GM10248 (cell line): ENCODE measurements at regions of chr5 and their contacts with region 1.

Region 1: GRCh38 chr5:10364186-10364683 is 10.7 kb downstream of the MARCHF6 start:
- DNase-seq: no peak
- CTCF ChIP-seq: no peak

Region 2: DNA sequence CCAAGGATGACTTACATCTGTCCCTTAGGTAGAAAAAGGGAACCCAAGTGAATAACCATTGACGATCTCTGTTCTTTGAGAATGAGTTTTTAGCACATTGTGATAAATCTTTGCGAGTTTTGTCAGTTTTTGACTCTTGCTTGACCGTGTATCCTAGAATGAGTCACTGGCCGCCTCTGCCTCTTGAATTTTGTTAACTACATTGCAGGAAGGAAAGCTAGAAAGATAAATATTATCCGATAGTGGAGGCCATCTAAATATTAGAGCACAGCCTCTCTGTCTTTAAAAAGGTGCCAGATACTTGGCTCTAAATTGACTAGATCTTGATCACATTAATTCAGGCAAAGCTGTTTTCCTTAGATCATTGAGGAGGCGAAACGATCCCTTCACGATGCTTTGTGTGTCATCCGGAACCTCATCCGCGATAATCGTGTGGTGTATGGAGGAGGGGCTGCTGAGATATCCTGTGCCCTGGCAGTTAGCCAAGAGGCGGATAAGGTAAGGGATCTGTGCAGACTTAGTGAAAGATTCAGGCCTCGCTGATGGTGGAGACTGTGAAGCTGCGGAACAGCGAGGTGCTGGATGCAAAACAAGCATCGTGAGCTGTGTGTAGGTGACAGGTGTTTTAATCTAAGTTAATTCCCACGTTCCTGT is 102.0 kb before region 1 on chr5:
- CTCF ChIA-PET with region 1: no interaction called
- POLR2A ChIA-PET with region 1: no interaction called
- DNase-seq: no peak
- CTCF ChIP-seq: no peak

Region 3: DNA sequence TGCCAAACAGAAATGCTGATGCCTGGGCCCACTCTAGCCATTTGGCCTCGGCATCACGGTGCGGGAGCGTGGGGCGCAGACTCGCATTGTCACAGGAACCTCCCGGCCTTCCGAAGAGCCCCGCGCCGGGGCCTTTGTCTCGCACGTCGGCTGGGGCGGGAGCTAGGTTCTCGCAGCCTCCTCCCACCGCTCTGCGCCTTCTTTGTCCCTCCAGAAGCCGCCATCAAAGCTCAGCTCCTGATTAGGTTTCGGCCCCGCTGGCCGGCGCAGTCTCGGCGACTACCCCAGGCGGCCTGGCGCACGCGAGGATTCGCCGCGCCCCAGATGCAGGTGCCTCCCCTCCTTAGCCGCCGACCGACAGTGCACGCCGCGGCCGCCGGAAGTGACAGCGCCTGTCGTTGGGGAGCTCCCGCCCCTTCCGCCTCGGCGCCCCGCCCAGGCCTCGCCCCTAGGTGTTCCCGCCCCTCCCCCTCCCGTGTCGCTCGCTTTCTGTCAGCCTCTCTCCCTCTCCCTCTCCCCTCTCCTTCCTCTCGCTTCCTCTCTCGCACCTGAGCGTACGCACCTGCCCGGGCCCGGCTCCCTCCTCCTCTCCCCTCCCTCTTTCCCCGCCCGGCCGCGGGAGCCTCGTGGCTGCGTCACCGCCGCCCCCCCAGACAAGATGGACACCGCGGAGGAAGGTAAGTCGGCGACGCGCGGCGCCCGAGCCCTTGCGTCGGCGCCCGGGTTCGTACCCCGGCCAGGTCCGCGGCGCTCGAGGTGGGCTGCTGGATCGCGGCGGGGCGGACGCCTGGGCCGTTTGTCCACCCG is 10.8 kb before region 1 on chr5 and contains the start of gene MARCHF6:
- CTCF ChIA-PET with region 1: interaction called, 12 read pairs
- POLR2A ChIA-PET with region 1: interaction called, 4 read pairs
- DNase-seq: peak; percentile 94
- CTCF ChIP-seq: peak; percentile 5